Activated naive CD4-positive, alpha-beta T cell treated with anti-CD3 and anti-CD28 coated beads, Interleukin-2, amount 10 ng/mL, durations not matched to agents 7 days and 5 days (primary cell): ENCODE measurements at regions of chr2 and their contacts with region 1.

Region 1: GRCh38 chr2:196277002-196277401 is 105.6 kb upstream of the STK17B start:
- DNase-seq: peak; percentile 53
- H3K4me3 Mint-ChIP-seq: no peak overlapping the region
- H3K27ac Mint-ChIP-seq: peak overlapping the region; percentile 8
- H3K4me1 Mint-ChIP-seq: peaks cover 44% of the 10 kb centered on the region
- H3K27me3 Mint-ChIP-seq: no peaks in the 10 kb centered on the region

Region 2: GRCh38 chr2:196076778-196077568 is 200.0 kb before region 1 on chr2:
- CTCF ChIA-PET with region 1: interaction called, 29 read pairs
- DNase-seq: no peak
- H3K4me3 Mint-ChIP-seq: no peak overlapping the region
- H3K27ac Mint-ChIP-seq: no peak overlapping the region
- H3K4me1 Mint-ChIP-seq: peaks cover 13% of the 10 kb centered on the region
- H3K27me3 Mint-ChIP-seq: no peaks in the 10 kb centered on the region

Region 3: GRCh38 chr2:196149948-196150347 is 127.1 kb before region 1 on chr2:
- CTCF ChIA-PET with region 1: interaction called, 11 read pairs
- DNase-seq: no peak
- H3K4me3 Mint-ChIP-seq: peak overlapping the region; percentile 49
- H3K27ac Mint-ChIP-seq: peak overlapping the region; percentile 83
- H3K4me1 Mint-ChIP-seq: peaks cover 89% of the 10 kb centered on the region
- H3K27me3 Mint-ChIP-seq: no peaks in the 10 kb centered on the region

Region 4: GRCh38 chr2:196239622-196240587 is 37.1 kb before region 1 on chr2:
- CTCF ChIA-PET with region 1: interaction called, 26 read pairs
- DNase-seq: peak; percentile 92
- H3K4me3 Mint-ChIP-seq: peak overlapping the region; percentile 35
- H3K27ac Mint-ChIP-seq: peak overlapping the region; percentile 87
- H3K4me1 Mint-ChIP-seq: peaks cover 87% of the 10 kb centered on the region
- H3K27me3 Mint-ChIP-seq: no peaks in the 10 kb centered on the region

Region 5: GRCh38 chr2:196259507-196260481 is 17.2 kb before region 1 on chr2:
- CTCF ChIA-PET with region 1: interaction called, 16 read pairs
- DNase-seq: peak; percentile 68
- H3K4me3 Mint-ChIP-seq: peak overlapping the region; percentile 79
- H3K27ac Mint-ChIP-seq: peak overlapping the region; percentile 97
- H3K4me1 Mint-ChIP-seq: peaks cover 76% of the 10 kb centered on the region
- H3K27me3 Mint-ChIP-seq: no peaks in the 10 kb centered on the region

Region 6: DNA sequence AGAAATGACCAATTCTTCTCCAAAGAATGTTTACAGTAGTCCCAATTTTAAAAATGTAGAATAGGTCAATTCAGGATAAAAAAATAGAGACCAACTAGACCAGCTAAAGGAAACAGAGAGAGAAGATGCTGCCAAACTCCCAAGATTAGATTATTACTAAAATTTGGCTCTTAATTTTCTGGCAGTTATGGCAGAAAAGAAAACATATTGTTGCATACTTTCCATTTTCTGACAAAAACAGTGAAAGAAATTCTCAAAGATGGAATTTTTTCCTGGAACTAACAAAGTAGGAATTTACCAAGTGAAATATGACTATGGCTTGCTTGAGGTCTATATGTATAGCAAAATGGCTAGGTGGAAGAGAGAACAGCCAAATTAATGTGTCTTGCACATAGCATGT is 32.7 kb after region 1 on chr2:
- CTCF ChIA-PET with region 1: no interaction called
- DNase-seq: no peak
- H3K4me3 Mint-ChIP-seq: no peak overlapping the region
- H3K27ac Mint-ChIP-seq: no peak overlapping the region
- H3K4me1 Mint-ChIP-seq: no peaks in the 10 kb centered on the region
- H3K27me3 Mint-ChIP-seq: peaks cover 13% of the 10 kb centered on the region